A673 (cell line): ENCODE measurements at regions of chr19 and their contacts with region 1.

Region 1: DNA sequence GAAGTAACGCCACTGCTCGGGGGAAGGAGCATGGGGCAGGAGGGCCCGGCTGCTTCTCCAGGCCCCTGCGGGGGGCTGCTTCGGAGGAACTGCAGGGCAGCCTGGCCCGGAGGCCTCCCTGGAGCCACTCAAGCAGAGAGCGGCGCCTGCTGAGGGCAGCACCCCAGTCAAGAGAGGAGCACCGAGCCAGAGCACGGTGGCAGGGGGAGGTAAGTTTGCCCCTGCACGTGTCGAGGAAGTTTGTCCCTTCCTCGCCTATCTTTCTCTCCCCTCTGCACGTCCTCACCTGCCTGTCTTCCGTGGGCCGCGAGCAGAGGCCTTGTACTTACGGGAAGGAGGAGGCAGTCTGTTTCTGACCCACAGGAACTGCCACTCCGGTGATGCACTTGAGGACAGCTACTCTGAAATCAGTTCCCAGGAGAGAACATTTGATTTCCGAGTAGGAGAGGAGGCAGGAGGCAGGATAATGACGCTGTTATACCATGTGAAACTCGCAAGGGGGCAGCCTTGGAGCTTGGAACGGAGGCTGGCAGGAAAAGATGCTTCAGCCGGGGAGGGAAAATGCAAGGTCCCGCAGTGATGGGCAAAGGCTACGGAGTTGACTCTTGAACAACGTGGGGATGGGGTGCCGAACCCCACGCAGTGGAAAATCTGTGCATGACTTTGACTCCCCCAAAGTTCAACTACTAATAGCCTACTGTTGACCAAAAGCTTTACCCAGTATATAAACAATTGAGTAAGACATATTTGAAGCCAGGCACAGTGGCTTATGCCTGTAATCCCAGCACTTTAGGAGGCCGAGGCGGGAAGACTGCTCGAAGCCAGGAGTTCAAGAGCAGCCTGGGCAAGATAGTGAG is 5.0 kb downstream of the FFAR1 start:
- DNase-seq: peak; percentile 82
- H3K4me3 ChIP-seq: no peak overlapping the region
- H3K27ac ChIP-seq: no peak overlapping the region
- H3K4me1 ChIP-seq: peaks cover 19% of the 10 kb centered on the region
- H3K27me3 ChIP-seq: no peaks in the 10 kb centered on the region
- CTCF ChIP-seq: peak; percentile 83

Region 2: GRCh38 chr19:35468637-35469036 is 116.0 kb after region 1 on chr19:
- CTCF ChIA-PET with region 1: interaction called, 3 read pairs
- POLR2A ChIA-PET with region 1: no interaction called
- intact Hi-C with region 1: loop called (anchors 2 kb)
- DNase-seq: peak; percentile 51
- H3K4me3 ChIP-seq: no peak overlapping the region
- H3K27ac ChIP-seq: no peak overlapping the region
- H3K4me1 ChIP-seq: no peaks in the 10 kb centered on the region
- H3K27me3 ChIP-seq: no peaks in the 10 kb centered on the region
- CTCF ChIP-seq: peak; percentile 51

Region 3: GRCh38 chr19:35495107-35496064 is 142.7 kb after region 1 on chr19:
- CTCF ChIA-PET with region 1: interaction called, 23 read pairs
- POLR2A ChIA-PET with region 1: no interaction called
- intact Hi-C with region 1: loop called (anchors 1 kb)
- DNase-seq: peak; percentile 76
- H3K4me3 ChIP-seq: no peak overlapping the region
- H3K27ac ChIP-seq: no peak overlapping the region
- H3K4me1 ChIP-seq: no peaks in the 10 kb centered on the region
- H3K27me3 ChIP-seq: peaks cover 27% of the 10 kb centered on the region
- CTCF ChIP-seq: peak; percentile 95

Region 4: DNA sequence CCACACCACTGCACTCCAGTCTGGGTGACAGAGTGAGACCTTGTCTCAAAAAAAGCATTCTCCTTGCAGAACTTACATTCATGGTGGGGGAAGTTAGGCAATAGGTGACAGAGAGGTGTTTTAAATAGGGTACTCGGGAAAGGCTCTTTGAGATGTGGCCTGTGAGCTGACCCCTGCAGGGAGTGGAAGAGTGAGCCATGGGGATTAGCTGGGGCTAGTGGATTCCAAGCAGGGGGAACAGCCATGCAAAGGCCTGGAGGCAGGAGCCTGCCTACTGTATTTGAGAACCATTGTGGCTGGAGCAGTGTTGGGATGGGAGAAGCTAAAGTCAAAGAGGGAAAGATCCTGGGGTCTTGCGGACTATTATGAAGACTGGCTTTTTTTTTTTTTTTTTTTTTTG is 164.7 kb after region 1 on chr19:
- CTCF ChIA-PET with region 1: interaction called, 12 read pairs
- POLR2A ChIA-PET with region 1: no interaction called
- intact Hi-C with region 1: no loop called
- DNase-seq: no peak
- H3K4me3 ChIP-seq: no peak overlapping the region
- H3K27ac ChIP-seq: no peak overlapping the region
- H3K4me1 ChIP-seq: no peaks in the 10 kb centered on the region
- H3K27me3 ChIP-seq: peaks cover 36% of the 10 kb centered on the region
- CTCF ChIP-seq: no peak

Region 5: GRCh38 chr19:35569281-35569781 is 216.7 kb after region 1 on chr19:
- CTCF ChIA-PET with region 1: no interaction called
- POLR2A ChIA-PET with region 1: no interaction called
- intact Hi-C with region 1: no loop called
- DNase-seq: no peak
- H3K4me3 ChIP-seq: no peak overlapping the region
- H3K27ac ChIP-seq: no peak overlapping the region
- H3K4me1 ChIP-seq: no peaks in the 10 kb centered on the region
- H3K27me3 ChIP-seq: peaks cover 8% of the 10 kb centered on the region
- CTCF ChIP-seq: no peak

Region 6: GRCh38 chr19:35648017-35648961 is 295.6 kb after region 1 on chr19 and contains the start of gene COX6B1:
- CTCF ChIA-PET with region 1: no interaction called
- POLR2A ChIA-PET with region 1: no interaction called
- intact Hi-C with region 1: loop called (anchors 10 kb)
- DNase-seq: peak; percentile 99
- H3K4me3 ChIP-seq: peak within 1 kb of the TSS; percentile 79
- H3K27ac ChIP-seq: peak within 1 kb of the TSS; percentile 82
- H3K4me1 ChIP-seq: peaks cover 4% of the 10 kb centered on the region
- H3K27me3 ChIP-seq: no peaks in the 10 kb centered on the region
- CTCF ChIP-seq: no peak
- total RNA-seq, gene COX6B1: 456 and 467 TPM in 2 replicates